Breast epithelium (tissue), 4 donors: ENCODE measurements at regions of chr20 and their contacts with region 1.

Region 1: DNA sequence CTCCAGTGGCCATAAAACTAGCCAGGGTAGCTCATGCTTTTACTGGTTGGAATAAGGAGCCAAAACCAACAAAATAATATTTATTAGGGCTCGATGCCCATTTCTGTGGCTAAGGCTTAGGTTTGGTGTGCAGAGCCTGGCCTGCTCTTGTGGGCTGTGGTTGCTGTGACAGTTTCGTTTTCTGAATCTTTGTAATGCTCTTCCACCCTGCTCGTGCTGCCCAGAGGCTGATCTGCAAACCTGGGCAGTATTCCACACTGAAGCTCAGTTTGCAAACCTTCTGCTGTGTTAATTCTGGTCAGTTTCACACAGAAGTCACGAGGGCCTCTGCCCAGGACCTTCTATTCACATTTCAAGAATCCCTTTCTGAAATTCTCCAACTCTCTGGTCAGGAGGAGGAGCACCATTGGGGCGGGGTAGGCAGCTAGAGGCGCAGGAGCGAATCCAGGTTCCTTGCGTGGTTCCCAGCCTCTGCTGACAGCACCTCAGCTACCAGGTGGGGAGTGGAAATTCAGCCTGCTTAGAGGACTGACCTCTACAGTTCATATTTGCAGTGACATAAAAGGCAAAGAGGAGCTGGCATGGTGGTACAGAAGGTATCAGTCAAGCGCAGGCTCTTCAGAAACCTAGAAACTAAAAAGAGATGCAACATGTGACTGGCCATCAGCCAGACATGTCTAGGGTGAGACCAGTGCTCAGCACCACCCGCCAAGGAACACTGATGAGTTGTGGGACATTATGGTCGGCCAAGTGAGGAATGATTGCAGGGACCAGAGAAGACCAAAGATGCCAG is 14.3 kb upstream of the C20orf144 start:
- DNase-seq: no peak
- H3K4me3 ChIP-seq: peak overlapping the region in 2 of 3 donors; percentile 0 to 6
- H3K27ac ChIP-seq: peak overlapping the region; percentile 65 to 73
- H3K4me1 ChIP-seq: peaks cover 0 to 10% of the 10 kb centered on the region in 2 donors
- H3K27me3 ChIP-seq: no peaks in the 10 kb centered on the region
- CTCF ChIP-seq: no peak
- POLR2A ChIP-seq: no peak

Region 2: DNA sequence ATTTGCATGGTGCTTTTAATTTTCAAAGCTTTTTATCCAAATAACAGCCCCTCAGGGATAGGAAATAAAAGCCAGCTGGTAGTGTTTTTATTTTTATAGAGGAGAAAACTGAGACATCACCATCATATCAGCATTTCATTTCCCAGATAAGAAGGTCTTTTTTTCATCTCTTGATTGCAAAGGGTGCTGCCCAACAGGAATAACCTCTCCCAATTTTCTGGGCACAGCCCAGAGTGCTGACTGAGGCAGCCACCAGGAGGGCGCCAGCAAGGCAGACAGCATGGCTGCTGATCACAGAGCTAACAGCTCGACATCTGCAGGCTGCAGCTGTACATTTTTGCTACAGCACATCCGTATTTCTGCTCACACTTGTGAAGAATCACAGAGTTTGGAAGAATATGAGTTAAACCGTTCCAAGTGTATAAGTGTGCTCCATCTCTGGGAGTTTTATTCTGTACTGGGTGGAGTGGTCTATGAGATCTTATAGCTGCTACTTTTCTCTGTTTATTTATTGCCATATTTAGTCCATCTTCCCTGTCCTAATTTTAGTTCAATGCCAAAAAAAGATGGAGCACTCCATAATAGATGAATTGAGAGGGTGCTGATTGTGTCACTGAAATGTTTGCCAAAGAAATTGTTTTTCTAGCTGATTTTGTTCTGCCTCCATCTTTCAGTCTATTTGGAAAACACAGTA is 71.2 kb before region 1 on chr20:
- intact Hi-C with region 1: no loop called
- DNase-seq: no peak
- H3K4me3 ChIP-seq: no peak overlapping the region
- H3K27ac ChIP-seq: no peak overlapping the region
- H3K4me1 ChIP-seq: no peaks in the 10 kb centered on the region
- H3K27me3 ChIP-seq: no peaks in the 10 kb centered on the region
- CTCF ChIP-seq: no peak
- POLR2A ChIP-seq: no peak

Region 3: DNA sequence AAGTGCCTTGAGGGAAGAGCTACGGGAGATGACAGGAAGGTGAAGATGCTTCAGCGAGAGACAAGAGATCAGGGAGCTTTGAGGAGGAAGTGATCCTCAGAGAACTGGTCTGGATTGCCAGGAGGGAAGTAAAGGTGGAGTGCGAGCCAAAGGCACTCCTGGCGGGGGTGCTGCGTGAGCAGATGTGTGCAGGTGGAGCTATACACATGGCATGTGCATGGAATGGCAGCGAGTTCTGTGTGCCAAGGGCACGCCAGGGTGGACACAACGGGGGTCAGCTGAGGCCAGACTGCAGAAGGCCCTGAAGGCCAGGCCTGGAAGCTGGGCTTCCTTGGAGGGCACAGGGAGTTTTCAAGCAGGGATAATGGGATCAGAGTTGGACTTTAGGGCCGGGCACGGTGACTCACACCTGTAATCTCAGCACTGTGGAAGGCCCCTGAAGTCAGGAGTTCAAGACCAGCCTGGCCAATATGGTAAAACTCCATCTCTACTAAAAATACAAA is 66.1 kb after region 1 on chr20:
- intact Hi-C with region 1: loop called (anchors 2 kb)
- DNase-seq: no peak
- H3K4me3 ChIP-seq: no peak overlapping the region
- H3K27ac ChIP-seq: no peak overlapping the region
- H3K4me1 ChIP-seq: peaks cover 1 to 5% of the 10 kb centered on the region in 2 donors
- H3K27me3 ChIP-seq: no peaks in the 10 kb centered on the region
- CTCF ChIP-seq: no peak
- POLR2A ChIP-seq: no peak

Region 4: GRCh38 chr20:33773412-33774089 is 125.8 kb after region 1 on chr20:
- intact Hi-C with region 1: no loop called
- DNase-seq: no peak
- H3K4me3 ChIP-seq: no peak overlapping the region
- H3K27ac ChIP-seq: no peak overlapping the region
- H3K4me1 ChIP-seq: no peaks in the 10 kb centered on the region
- H3K27me3 ChIP-seq: no peaks in the 10 kb centered on the region
- CTCF ChIP-seq: no peak
- POLR2A ChIP-seq: no peak

Region 5: DNA sequence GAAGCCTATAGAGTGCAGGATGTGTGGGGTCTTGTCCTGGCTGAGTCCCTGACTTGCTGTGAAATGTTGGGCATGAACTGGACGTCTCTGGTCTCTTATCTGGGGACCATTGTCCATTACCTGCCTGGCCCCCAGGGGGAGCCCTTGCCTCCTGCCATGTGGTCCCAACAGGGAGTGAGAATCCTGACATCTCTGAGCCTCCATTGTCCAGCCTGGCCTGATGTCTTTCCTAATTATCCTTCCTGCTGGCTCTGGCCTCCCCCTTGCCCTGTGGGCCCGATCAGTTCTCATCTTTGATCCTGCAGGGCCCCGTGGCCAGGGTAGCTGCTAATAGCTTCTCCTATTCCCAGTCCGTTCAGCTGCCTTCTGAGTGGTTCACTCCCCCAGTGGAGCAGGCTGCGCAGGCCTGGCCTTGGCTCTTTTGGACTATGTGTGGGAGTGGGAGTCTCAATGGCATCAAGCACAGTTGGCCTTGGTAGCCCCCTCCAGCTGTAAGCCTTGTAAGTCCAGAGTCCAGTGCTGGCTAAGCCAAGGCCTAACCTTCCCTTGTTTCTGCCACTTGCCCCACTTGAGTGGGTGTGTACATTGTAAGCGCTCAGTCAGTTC is 268.0 kb after region 1 on chr20:
- intact Hi-C with region 1: no loop called
- DNase-seq: no peak
- H3K4me3 ChIP-seq: no peak overlapping the region
- H3K27ac ChIP-seq: no peak overlapping the region
- H3K4me1 ChIP-seq: no peaks in the 10 kb centered on the region
- H3K27me3 ChIP-seq: no peaks in the 10 kb centered on the region
- CTCF ChIP-seq: peak in 1 of 3 donors; percentile 20
- POLR2A ChIP-seq: no peak